Activated CD4-positive, alpha-beta memory T cell treated with anti-CD3 and anti-CD28 coated beads, Interleukin-2, amount 10 ng/mL, durations not matched to agents 7 days and 5 days (primary cell): ENCODE measurements at regions of chr12 and their contacts with region 1.

Region 1: DNA sequence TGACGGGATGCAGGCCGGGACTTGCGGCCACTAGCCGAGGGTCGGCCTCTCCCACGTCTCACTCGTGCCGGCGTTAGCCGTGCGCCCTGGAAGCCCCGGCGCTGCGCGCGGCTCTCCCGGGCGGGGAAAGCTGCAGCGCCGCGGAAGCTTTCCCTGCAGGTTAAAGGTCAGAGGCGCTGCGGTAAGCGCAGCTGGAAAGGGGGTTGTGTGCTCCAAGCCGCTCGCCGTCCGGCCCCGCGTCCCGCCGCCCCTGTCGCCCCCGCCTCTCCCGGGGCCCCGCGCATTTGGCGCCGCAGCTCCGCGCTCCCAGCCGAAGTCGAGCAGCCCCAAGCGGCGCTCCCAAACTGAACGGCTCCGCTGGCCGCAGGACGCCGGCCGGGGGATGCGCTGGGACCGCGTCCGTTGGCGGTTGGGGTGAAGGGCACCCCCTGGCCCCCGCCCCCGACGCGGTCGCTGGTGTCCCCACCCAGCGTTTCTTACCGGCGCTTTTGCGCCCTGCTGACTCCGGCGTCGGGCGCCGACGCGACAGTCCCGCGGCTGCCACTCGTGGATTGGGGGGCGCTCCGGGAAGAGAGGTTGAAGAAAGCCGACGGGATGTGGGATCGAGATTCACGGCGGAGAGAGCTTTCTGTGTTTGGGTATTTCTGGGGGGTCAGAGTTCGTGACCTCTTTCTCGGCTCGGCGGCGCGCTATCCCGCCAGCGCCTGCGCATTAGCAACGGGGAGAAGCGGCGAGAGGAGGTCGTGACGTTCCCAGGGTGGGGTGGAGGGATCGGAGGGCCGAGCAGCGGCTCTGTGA is at the start of gene NR2C1:
- DNase-seq: peak; percentile 94
- H3K4me3 Mint-ChIP-seq: peak within 1 kb of the TSS; percentile 82
- H3K27ac Mint-ChIP-seq: peak within 1 kb of the TSS; percentile 71
- H3K4me1 Mint-ChIP-seq: peaks cover 12% of the 10 kb centered on the region
- H3K27me3 Mint-ChIP-seq: no peaks in the 10 kb centered on the region
- total RNA-seq, gene NR2C1: 36.0 to 41.6 TPM

Region 2: DNA sequence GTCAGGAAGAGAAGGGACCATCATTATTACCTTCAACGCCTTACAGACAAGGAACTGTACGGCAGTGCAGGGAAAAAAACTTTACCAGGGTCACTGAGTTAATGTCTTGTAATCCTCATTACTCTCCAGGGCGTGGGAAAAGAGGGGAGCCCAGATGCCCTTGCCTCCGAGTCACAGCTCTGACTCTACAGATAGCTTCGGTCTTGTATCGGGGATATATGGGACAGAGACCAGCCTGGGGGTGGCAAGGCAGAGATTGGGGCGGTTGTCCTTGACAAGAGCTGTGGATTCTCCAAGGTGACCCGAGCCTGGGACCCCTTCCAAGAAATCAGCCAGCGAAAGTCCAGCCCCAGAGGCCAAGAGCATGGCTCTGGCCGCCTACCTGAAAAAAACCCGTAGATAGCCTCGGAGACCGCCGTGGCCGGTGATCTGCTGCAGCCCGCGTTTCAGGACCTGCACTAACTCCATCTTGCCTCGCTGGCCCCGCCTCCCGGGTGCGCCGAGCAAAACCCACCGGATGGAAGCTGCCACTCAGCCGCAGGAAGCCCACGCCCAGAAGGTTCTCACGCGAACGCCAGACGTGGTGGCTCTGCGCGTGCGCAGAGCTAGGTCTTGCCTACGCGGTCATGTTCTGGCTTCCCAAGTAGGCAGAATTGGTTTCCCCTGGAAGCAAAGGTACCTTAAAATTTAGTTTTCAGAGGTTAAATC is 69.7 kb before region 1 on chr12 and contains the start of gene NDUFA12:
- CTCF ChIA-PET with region 1: interaction called, 4 read pairs
- POLR2A ChIA-PET with region 1: interaction called, 37 read pairs
- DNase-seq: peak; percentile 95
- H3K4me3 Mint-ChIP-seq: peak within 1 kb of the TSS; percentile 87
- H3K27ac Mint-ChIP-seq: peak within 1 kb of the TSS; percentile 77
- H3K4me1 Mint-ChIP-seq: peaks cover 56% of the 10 kb centered on the region
- H3K27me3 Mint-ChIP-seq: no peaks in the 10 kb centered on the region
- total RNA-seq, gene NDUFA12: 155 to 167 TPM

Region 3: DNA sequence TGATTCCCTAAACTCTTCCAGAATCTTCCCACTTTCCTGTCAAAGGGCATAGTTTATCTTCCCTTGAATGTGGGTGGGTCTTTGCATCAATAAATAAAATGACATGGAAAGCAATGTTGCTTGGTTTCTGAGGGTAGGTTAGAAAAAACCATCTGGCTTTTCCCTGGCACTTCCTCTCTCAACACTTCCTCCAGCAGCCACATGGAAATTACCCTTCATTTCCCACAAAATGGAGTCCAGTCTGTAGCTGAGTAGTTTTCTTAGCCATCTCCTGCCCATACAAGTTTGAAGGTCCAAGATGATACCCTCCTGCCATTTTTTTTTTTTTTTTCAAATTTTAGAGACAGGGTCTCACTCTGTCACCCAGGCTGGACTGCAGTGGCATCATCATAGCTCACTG is 58.5 kb before region 1 on chr12:
- CTCF ChIA-PET with region 1: no interaction called
- POLR2A ChIA-PET with region 1: no interaction called
- DNase-seq: no peak
- H3K4me3 Mint-ChIP-seq: no peak overlapping the region
- H3K27ac Mint-ChIP-seq: no peak overlapping the region
- H3K4me1 Mint-ChIP-seq: no peaks in the 10 kb centered on the region
- H3K27me3 Mint-ChIP-seq: peaks cover 4% of the 10 kb centered on the region

Region 4: DNA sequence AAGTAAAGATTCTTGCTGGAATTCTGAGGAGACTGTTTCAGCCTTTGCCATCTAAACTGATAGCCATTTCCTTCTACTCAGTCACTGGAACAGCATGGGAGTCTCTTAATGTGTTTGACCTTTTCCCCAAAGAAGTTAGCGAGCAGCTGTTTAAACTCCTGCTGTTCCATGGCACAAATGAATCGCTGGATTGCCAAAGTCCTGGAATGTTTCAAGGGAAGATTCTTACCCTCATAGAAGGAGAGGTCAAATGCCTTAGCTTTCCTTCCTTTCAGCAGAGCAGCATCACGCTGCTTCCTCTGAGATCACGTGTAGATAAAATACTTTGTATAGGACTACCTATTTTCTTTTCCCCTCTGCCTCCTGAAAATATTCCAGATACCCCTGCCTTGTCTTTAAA is 10.8 kb after region 1 on chr12:
- CTCF ChIA-PET with region 1: interaction called, 26 read pairs
- POLR2A ChIA-PET with region 1: interaction called, 3 read pairs
- DNase-seq: no peak
- H3K4me3 Mint-ChIP-seq: no peak overlapping the region
- H3K27ac Mint-ChIP-seq: no peak overlapping the region
- H3K4me1 Mint-ChIP-seq: peaks cover 2% of the 10 kb centered on the region
- H3K27me3 Mint-ChIP-seq: peaks cover 7% of the 10 kb centered on the region

Region 5: DNA sequence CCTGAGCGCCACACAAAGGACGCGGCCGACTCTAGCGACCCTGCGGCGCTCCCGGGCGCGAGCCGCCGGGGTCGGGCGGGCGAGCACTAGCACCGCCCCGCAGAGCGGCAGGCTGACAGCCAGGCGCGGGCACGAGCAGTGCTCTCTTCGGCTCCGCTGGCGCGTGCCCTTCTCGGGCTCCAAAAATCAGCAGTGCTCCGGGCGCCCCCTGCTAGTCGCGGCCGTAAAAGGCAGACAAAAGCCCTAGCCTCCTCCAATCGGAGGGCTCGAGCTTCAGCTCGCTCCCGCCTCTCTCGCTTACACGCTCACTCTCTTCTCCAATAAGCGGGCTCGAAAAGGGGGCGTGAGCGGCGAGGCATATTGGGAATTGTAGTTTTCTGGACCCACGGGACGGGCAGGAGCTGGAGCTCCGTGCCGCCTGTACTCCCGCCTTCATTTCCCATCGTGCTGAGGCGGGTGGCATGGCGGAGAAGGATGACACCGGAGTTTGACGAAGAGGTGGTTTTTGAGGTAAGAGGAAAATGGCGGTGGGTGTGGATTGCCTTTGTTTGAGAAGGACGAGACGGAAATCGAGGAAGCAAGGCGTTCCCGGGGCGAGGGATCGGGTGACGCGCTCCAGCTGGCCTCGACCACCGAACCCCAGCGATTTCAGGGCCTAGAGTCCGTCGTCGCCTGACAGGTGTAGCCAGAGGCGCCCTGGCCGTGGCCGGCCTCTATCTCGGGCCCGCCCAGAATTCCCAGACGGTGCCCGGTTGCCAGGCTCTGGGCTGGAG is 144.5 kb after region 1 on chr12 and contains the starts of genes FGD6 and VEZT:
- CTCF ChIA-PET with region 1: interaction called, 15 read pairs
- POLR2A ChIA-PET with region 1: interaction called, 8 read pairs
- DNase-seq: peak; percentile 99
- H3K4me3 Mint-ChIP-seq: peak within 1 kb of the TSS; percentile 89
- H3K27ac Mint-ChIP-seq: peak within 1 kb of the TSS; percentile 89
- H3K4me1 Mint-ChIP-seq: peaks cover 22% of the 10 kb centered on the region
- H3K27me3 Mint-ChIP-seq: peaks cover 8% of the 10 kb centered on the region
- total RNA-seq, gene FGD6: 0.45 to 0.71 TPM
- total RNA-seq, gene VEZT: 35.7 to 38.4 TPM